ENCODE measurements at regions of chr10 and their contacts with region 1.

Region 1: GRCh38 chr10:28302638-28303488 is at the start of gene MPP7:
- DNase-seq: peak; percentile 97
- ATAC-seq: peak; percentile 87
- H3K4me3 ChIP-seq: peak within 1 kb of the TSS; percentile 55 to 96 (median 76)
- H3K4me3 Mint-ChIP-seq: peak within 1 kb of the TSS; percentile 94
- H3K27ac ChIP-seq: peak within 1 kb of the TSS; percentile 66 to 73
- H3K27ac Mint-ChIP-seq: peak within 1 kb of the TSS; percentile 80
- H3K4me1 ChIP-seq: peaks cover 17 to 19% of the 10 kb centered on the region in 2 donors
- H3K4me1 Mint-ChIP-seq: peaks cover 24% of the 10 kb centered on the region
- H3K27me3 ChIP-seq: peaks cover 0 to 29% (median 20%) of the 10 kb centered on the region in 4 experiments
- H3K27me3 Mint-ChIP-seq: peaks cover 33% of the 10 kb centered on the region
- CTCF ChIP-seq: peak; percentile 59
- total RNA-seq, gene MPP7: 13.1 and 13.6 TPM in 2 replicates

Region 2: GRCh38 chr10:27504007-27504807 is 798.7 kb before region 1 on chr10 and contains the start of gene RAB18:
- CTCF ChIA-PET with region 1: interaction called, 4 read pairs
- POLR2A ChIA-PET with region 1: no interaction called
- intact Hi-C with region 1: loop called (anchors 1 kb)
- DNase-seq: peak; percentile 98
- ATAC-seq: peak; percentile 95
- H3K4me3 ChIP-seq: peak within 1 kb of the TSS; percentile 68 to 91 (median 86)
- H3K4me3 Mint-ChIP-seq: peak within 1 kb of the TSS; percentile 100
- H3K27ac ChIP-seq: peak within 1 kb of the TSS; percentile 87 to 88
- H3K27ac Mint-ChIP-seq: peak within 1 kb of the TSS; percentile 100
- H3K4me1 ChIP-seq: peaks cover 13 to 18% of the 10 kb centered on the region in 2 donors
- H3K4me1 Mint-ChIP-seq: peaks cover 41% of the 10 kb centered on the region
- H3K27me3 ChIP-seq: peaks cover 0 to 15% (median 2%) of the 10 kb centered on the region in 4 experiments
- H3K27me3 Mint-ChIP-seq: peaks cover 4% of the 10 kb centered on the region
- CTCF ChIP-seq: no peak
- total RNA-seq, gene RAB18: 56.5 and 60.5 TPM in 2 replicates

Region 3: DNA sequence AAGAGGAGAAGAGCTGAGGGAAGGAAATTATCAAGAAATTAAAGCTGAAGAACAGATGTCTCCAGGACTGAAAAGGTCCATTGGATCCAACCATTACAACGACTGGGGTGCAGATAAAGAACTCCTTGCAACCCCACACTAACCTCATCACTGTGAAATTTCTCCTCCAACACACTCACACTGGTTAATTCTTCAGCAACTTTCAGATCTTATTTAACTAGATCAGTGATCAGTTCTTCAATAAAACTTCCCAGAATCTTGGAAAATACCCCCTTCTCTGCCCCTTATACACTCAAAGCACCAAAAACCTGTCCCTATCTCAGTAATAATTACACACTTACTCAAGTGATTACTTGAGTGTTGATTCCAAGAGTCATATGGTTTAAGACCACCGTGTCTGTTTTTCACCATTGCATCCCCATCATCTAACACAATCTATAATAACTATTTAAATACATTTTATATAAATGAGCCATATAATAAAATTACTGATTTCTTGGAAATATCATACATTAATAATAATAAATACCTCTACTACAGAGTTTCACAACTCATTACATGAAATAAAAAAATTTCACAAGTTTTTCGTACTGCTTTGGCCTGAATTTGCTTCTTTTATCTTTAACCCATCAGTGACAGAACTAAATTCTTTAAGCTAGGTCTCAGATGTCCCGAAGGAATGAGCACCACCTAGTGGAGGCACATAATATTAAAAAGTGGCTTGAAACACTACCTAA is 123.7 kb before region 1 on chr10:
- CTCF ChIA-PET with region 1: interaction called, 3 read pairs
- POLR2A ChIA-PET with region 1: no interaction called
- intact Hi-C with region 1: loop called (anchors 2 kb)
- DNase-seq: peak; percentile 57
- ATAC-seq: no peak
- H3K4me3 ChIP-seq: peak overlapping the region in 1 of 5 experiments; percentile 34
- H3K4me3 Mint-ChIP-seq: no peak overlapping the region
- H3K27ac ChIP-seq: no peak overlapping the region
- H3K27ac Mint-ChIP-seq: no peak overlapping the region
- H3K4me1 ChIP-seq: peaks cover 7 to 14% of the 10 kb centered on the region in 2 donors
- H3K4me1 Mint-ChIP-seq: peaks cover 15% of the 10 kb centered on the region
- H3K27me3 ChIP-seq: no peaks in the 10 kb centered on the region
- H3K27me3 Mint-ChIP-seq: no peaks in the 10 kb centered on the region
- CTCF ChIP-seq: peak; percentile 93

Region 4: GRCh38 chr10:28326516-28327490 is 23.9 kb after region 1 on chr10:
- CTCF ChIA-PET with region 1: interaction called, 16 read pairs
- POLR2A ChIA-PET with region 1: interaction called, 7 read pairs
- intact Hi-C with region 1: no loop called
- DNase-seq: no peak
- ATAC-seq: no peak
- H3K4me3 ChIP-seq: no peak overlapping the region
- H3K4me3 Mint-ChIP-seq: no peak overlapping the region
- H3K27ac ChIP-seq: no peak overlapping the region
- H3K27ac Mint-ChIP-seq: peak overlapping the region; percentile 11
- H3K4me1 ChIP-seq: peaks cover 0 to 10% of the 10 kb centered on the region in 2 donors
- H3K4me1 Mint-ChIP-seq: peaks cover 19% of the 10 kb centered on the region
- H3K27me3 ChIP-seq: peaks cover 0 to 5% (median 0%) of the 10 kb centered on the region in 4 experiments
- H3K27me3 Mint-ChIP-seq: peaks cover 4% of the 10 kb centered on the region
- CTCF ChIP-seq: no peak

Region 5: GRCh38 chr10:28367929-28368484 is 65.1 kb after region 1 on chr10:
- CTCF ChIA-PET with region 1: interaction called, 14 read pairs
- POLR2A ChIA-PET with region 1: interaction called, 8 read pairs
- intact Hi-C with region 1: loop called (anchors 1 kb)
- DNase-seq: peak; percentile 85
- ATAC-seq: peak; percentile 98
- H3K4me3 ChIP-seq: peak overlapping the region in 1 of 5 experiments; percentile 9
- H3K4me3 Mint-ChIP-seq: peak overlapping the region; percentile 66
- H3K27ac ChIP-seq: peak overlapping the region; percentile 78 to 84
- H3K27ac Mint-ChIP-seq: peak overlapping the region; percentile 90
- H3K4me1 ChIP-seq: peaks cover 38 to 46% of the 10 kb centered on the region in 2 donors
- H3K4me1 Mint-ChIP-seq: peaks cover 33% of the 10 kb centered on the region
- H3K27me3 ChIP-seq: no peaks in the 10 kb centered on the region
- H3K27me3 Mint-ChIP-seq: no peaks in the 10 kb centered on the region
- CTCF ChIP-seq: no peak

Region 6: DNA sequence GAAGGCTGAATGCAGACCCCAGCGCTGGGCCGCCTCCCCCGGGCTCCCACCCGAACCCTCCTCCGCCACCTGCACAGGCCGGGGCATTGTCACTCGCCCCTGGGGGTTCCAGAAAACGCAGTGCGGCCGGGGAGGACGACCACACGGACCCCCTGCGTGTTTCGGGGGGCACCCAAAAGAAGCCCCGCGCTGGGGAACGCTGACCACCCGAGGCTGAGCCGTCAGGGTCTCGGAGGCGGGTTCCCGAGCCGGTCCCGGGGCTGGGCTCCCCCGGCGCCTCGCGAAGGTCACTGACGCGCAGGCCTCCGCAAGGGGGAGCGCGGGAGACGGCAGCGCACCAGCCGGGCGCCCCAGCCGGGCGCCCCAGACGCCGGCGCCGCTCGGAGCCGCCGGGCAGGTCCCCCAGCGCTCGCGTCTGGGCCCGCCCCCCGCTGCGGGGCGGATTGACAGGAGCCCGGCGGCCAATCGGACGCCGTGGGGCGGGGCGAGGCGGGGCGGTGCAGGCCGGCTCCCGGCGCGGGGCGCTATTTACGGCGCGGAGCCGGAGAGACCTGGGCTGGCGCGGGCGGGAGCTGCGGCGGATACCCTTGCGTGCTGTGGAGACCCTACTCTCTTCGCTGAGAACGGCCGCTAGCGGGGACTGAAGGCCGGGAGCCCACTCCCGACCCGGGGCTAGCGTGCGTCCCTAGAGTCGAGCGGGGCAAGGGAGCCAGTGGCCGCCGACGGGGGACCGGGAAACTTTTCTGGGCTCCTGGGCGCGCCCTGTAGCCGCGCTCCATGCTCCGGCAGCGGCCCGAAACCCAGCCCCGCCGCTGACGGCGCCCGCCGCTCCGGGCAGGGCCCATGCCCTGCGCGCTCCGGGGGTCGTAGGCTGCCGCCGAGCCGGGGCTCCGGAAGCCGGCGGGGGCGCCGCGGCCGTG is 374.4 kb after region 1 on chr10 and contains the start of gene BAMBI:
- CTCF ChIA-PET with region 1: no interaction called
- POLR2A ChIA-PET with region 1: no interaction called
- intact Hi-C with region 1: loop called (anchors 10 kb)
- DNase-seq: peak; percentile 92
- ATAC-seq: peak; percentile 96
- H3K4me3 ChIP-seq: peak within 1 kb of the TSS; percentile 38 to 68 (median 58)
- H3K4me3 Mint-ChIP-seq: peak within 1 kb of the TSS; percentile 91
- H3K27ac ChIP-seq: no peak within 1 kb of the TSS
- H3K27ac Mint-ChIP-seq: peak within 1 kb of the TSS; percentile 68
- H3K4me1 ChIP-seq: peaks cover 37 to 39% of the 10 kb centered on the region in 2 donors
- H3K4me1 Mint-ChIP-seq: peaks cover 35% of the 10 kb centered on the region
- H3K27me3 ChIP-seq: peaks cover 3 to 74% (median 49%) of the 10 kb centered on the region in 4 experiments
- H3K27me3 Mint-ChIP-seq: peaks cover 75% of the 10 kb centered on the region
- CTCF ChIP-seq: peak; percentile 71
- total RNA-seq, gene BAMBI: 0.22 and 0.84 TPM in 2 replicates

Measured in B cell (primary cell).